ENCODE measurements at regions of chr12 and their contacts with region 1.

Region 1: DNA sequence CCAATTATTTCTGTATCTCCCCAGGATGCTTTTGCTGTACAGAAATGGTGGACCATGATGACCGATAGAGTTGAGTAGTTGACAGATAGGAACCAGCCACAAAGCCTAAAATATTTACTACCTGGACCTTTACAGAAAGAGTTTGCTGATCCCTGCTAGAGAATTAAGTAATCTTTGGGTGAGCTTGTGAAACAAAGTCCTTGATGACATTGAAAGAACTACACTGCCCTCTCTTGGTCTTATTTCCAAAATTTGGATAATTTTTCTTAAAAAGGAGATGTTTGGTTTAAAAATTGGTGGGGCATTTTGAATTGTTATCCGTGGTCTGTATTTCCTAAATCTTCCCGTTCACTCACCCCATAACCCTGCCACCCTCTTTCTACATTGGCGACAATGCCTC is 13.7 kb upstream of the TCTN1 start:
- DNase-seq: peak; percentile 56 to 77
- ATAC-seq: peak in 1 of 2 experiments; percentile 28; a peak in 2 of 6 replicates
- H3K4me3 ChIP-seq: no peak overlapping the region
- H3K27ac ChIP-seq: no peak overlapping the region
- H3K4me1 ChIP-seq: no peaks in the 10 kb centered on the region
- CTCF ChIP-seq: peak; percentile 86
- EP300 ChIP-seq: no peak
- POLR2A ChIP-seq: no peak
- RAD21 ChIP-seq: peak; percentile 91 to 95

Region 2: DNA sequence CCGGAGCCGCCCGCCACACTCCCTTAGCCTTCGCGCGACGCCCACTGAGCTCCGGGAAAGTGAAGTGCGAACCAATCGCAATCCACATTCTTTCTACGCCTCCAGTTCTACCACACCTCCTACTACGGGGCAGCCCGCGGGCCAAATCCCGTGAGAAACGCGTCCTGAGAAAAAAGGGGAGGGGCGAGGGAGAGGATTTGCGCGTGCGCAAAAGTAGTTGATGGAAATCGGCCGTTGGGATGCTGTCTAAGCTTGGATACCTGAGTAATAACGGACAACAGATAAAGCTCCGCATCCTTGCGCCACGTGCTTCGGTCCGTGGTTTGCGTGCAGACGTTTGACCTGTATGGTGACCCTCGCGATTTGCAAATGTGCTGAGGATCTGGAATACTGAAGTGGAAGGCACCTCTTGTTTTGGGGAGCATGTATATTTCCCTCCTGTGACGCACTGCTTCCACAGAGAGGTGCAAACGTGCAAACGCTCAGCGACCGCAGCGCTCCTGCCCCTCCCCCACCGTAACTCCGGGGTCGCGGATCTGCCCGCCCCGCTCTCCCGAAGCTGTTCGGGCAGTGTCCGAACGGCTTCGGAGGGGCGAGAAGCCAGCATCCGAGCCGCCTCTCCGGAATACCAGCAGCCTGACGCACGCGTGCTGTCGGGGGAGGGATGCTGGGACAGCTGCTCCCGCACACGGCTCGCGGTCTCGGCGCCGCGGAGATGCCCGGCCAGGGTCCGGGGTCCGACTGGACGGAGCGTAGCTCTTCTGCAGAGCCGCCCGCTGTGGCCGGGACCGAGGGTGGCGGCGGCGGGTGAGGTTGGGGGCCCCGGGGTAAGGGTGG is 131.8 kb before region 1 on chr12 and contains the starts of genes FAM216A and GPN3:
- CTCF ChIA-PET with region 1: interaction called, 168 read pairs
- POLR2A ChIA-PET with region 1: interaction called, 5 read pairs
- DNase-seq: peak; percentile 93 to 99
- ATAC-seq: peak; percentile 89 to 94
- H3K4me3 ChIP-seq: peak within 1 kb of the TSS; percentile 71
- H3K27ac ChIP-seq: peak within 1 kb of the TSS; percentile 90 to 96
- H3K4me1 ChIP-seq: peaks cover 16% of the 10 kb centered on the region; the same call in 2 of the 3 replicates
- CTCF ChIP-seq: no peak
- EP300 ChIP-seq: no peak
- POLR2A ChIP-seq: peak; percentile 46
- RAD21 ChIP-seq: no peak
- polyA plus RNA-seq, gene FAM216A: 27.9 and 40.6 TPM in 2 replicates
- polyA plus RNA-seq, gene GPN3: 47.2 and 63.8 TPM in 2 replicates

Region 3: GRCh38 chr12:110513842-110514241 is 86.4 kb before region 1 on chr12:
- CTCF ChIA-PET with region 1: interaction called, 184 read pairs
- POLR2A ChIA-PET with region 1: no interaction called
- DNase-seq: no peak
- ATAC-seq: no peak
- H3K4me3 ChIP-seq: no peak overlapping the region
- H3K27ac ChIP-seq: no peak overlapping the region
- H3K4me1 ChIP-seq: no peaks in the 10 kb centered on the region
- CTCF ChIP-seq: no peak
- EP300 ChIP-seq: no peak
- POLR2A ChIP-seq: no peak
- RAD21 ChIP-seq: no peak

Region 4: DNA sequence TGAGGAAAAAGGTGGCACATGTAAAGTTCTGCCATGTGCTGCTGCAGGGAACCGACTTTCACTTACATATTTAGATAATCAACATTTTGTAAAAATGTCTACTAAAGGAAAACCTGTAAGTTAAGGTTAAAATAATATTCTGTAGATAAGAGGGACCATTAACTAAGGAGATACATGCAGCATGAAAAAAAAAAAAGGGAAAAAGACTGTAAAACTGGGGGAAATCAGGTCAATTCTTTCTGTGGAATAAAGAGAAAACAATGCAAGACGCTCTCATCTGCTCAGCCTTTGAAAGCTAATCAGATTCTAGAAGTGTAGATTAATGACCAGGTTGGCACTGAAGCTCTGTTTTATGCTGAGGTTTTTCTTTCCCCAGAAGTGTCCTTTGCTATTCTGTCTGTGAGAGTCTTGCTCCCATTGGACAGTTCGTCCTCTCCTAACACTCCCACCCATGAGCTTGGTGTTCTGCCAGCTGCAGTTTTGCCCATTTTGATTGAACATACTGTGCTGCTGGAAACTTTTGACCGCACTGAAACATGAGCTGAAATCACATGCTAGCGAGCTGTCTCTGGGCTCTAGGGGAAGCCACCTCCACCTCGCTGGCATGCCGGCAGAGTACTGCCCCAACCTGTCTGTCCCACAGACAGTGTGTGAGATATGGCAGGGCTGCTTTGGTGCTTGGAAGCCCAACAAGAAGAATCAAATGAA is 56.8 kb before region 1 on chr12:
- CTCF ChIA-PET with region 1: interaction called, 138 read pairs
- POLR2A ChIA-PET with region 1: no interaction called
- DNase-seq: no peak
- ATAC-seq: no peak
- H3K4me3 ChIP-seq: no peak overlapping the region
- H3K27ac ChIP-seq: peak overlapping the region in 1 of 2 experiments; percentile 34; a peak in 1 of 6 replicates
- H3K4me1 ChIP-seq: peaks cover 24% of the 10 kb centered on the region
- CTCF ChIP-seq: no peak
- EP300 ChIP-seq: no peak
- POLR2A ChIP-seq: no peak
- RAD21 ChIP-seq: no peak

Region 5: GRCh38 chr12:110577717-110578521 is 22.3 kb before region 1 on chr12:
- CTCF ChIA-PET with region 1: interaction called, 11 read pairs
- POLR2A ChIA-PET with region 1: no interaction called
- DNase-seq: peak; percentile 48 to 55
- ATAC-seq: peak; percentile 37 to 47; a peak in 5 of 6 replicates
- H3K4me3 ChIP-seq: peak overlapping the region; percentile 19; the same call in 1 of the 3 replicates
- H3K27ac ChIP-seq: peak overlapping the region; percentile 55 to 72
- H3K4me1 ChIP-seq: peaks cover 58% of the 10 kb centered on the region
- CTCF ChIP-seq: no peak
- EP300 ChIP-seq: no peak
- POLR2A ChIP-seq: no peak
- RAD21 ChIP-seq: no peak

Region 6: GRCh38 chr12:110619534-110619953 is 19.3 kb after region 1 on chr12:
- CTCF ChIA-PET with region 1: interaction called, 56 read pairs
- POLR2A ChIA-PET with region 1: no interaction called
- DNase-seq: no peak
- ATAC-seq: peak in 1 of 2 experiments; percentile 26; a peak in 1 of 6 replicates
- H3K4me3 ChIP-seq: no peak overlapping the region
- H3K27ac ChIP-seq: no peak overlapping the region
- H3K4me1 ChIP-seq: peaks cover 8% of the 10 kb centered on the region; the same call in 1 of the 3 replicates
- CTCF ChIP-seq: no peak
- EP300 ChIP-seq: no peak
- POLR2A ChIP-seq: no peak
- RAD21 ChIP-seq: no peak

Measured in A549 (cell line).